ENCODE measurements at regions of chr3 and their contacts with region 1.

Region 1: DNA sequence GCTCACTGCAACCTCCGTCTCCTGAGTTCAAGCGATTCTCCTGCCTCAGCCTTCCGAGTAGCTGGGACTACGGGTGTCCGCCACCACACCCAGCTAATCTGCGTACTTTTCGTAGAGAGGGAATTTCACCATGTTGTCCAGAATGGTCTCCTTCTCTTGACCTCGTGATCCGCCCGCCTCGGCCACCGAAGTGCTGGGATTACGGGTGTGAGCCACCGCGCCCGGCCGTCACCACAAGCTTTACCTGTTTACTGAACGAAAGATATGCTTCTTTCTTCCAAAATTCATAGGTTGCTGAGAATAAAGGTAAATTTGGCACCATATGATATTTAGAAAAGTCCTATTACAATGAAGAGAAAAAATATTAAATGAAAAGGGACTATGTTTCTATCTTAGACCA is 333.5 kb upstream of the EPHA6 start:
- DNase-seq: no peak
- H3K4me3 ChIP-seq: no peak overlapping the region
- H3K27ac ChIP-seq: no peak overlapping the region
- H3K4me1 ChIP-seq: no peaks in the 10 kb centered on the region
- H3K27me3 ChIP-seq: no peaks in the 10 kb centered on the region
- CTCF ChIP-seq: no peak

Region 2: DNA sequence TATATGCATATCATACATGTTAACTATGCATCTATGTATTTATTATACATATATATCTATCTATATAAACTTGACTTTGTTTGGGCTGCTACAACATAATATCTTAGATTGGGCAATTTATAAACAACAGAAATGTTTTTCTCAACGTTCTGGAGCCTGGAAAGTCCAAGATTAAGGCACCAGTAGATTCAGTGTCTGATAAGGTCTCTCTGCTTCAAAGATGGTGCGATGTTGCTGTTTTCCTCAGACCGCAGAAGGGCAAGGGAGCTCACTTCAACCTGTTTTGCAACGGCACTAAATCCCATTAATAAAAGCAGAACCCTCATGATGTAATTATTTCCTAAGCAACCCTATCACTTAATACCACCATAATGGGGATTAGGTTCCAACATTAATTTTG is 1283.3 kb before region 1 on chr3:
- CTCF ChIA-PET with region 1: no interaction called
- POLR2A ChIA-PET with region 1: no interaction called
- intact Hi-C with region 1: no loop called
- DNase-seq: no peak
- H3K4me3 ChIP-seq: no peak overlapping the region
- H3K27ac ChIP-seq: no peak overlapping the region
- H3K4me1 ChIP-seq: no peaks in the 10 kb centered on the region
- H3K27me3 ChIP-seq: no peaks in the 10 kb centered on the region
- CTCF ChIP-seq: no peak

Region 3: GRCh38 chr3:96294143-96294542 is 186.7 kb before region 1 on chr3:
- CTCF ChIA-PET with region 1: no interaction called
- POLR2A ChIA-PET with region 1: no interaction called
- intact Hi-C with region 1: no loop called
- DNase-seq: no peak
- H3K4me3 ChIP-seq: no peak overlapping the region
- H3K27ac ChIP-seq: no peak overlapping the region
- H3K4me1 ChIP-seq: no peaks in the 10 kb centered on the region
- H3K27me3 ChIP-seq: no peaks in the 10 kb centered on the region
- CTCF ChIP-seq: no peak

Region 4: DNA sequence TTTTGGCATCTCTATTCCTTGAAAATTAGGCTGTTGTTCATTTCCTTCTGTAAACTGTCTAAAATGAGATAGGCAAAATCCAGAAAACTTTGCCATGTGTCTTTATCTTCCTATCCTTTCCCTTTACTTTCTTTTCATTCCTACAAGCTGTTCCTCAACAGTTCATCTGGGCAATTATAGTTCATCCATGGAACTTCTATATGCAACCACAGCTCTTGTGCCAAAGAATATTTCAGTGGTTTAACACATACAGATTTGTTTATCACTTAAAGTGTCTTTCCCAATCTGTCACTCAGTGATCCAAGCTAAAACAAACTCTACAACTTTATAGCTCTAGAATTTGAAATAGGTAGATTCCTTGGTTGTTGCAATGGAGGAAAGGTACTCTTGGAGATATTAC is 103.2 kb after region 1 on chr3:
- CTCF ChIA-PET with region 1: no interaction called
- POLR2A ChIA-PET with region 1: no interaction called
- intact Hi-C with region 1: no loop called
- DNase-seq: no peak
- H3K4me3 ChIP-seq: no peak overlapping the region
- H3K27ac ChIP-seq: no peak overlapping the region
- H3K4me1 ChIP-seq: no peaks in the 10 kb centered on the region
- H3K27me3 ChIP-seq: no peaks in the 10 kb centered on the region
- CTCF ChIP-seq: no peak

Region 5: GRCh38 chr3:97613139-97613538 is 1132.3 kb after region 1 on chr3:
- CTCF ChIA-PET with region 1: interaction called, 11 read pairs
- POLR2A ChIA-PET with region 1: no interaction called
- intact Hi-C with region 1: no loop called
- DNase-seq: no peak
- H3K4me3 ChIP-seq: no peak overlapping the region
- H3K27ac ChIP-seq: no peak overlapping the region
- H3K4me1 ChIP-seq: no peaks in the 10 kb centered on the region
- H3K27me3 ChIP-seq: no peaks in the 10 kb centered on the region
- CTCF ChIP-seq: no peak